ENCODE measurements at regions of chr20 and their contacts with region 1.

Region 1: GRCh38 chr20:14406495-14406894 is 69.1 kb upstream of the FLRT3 start:
- DNase-seq: no peak
- CTCF ChIP-seq: no peak

Region 2: GRCh38 chr20:14355791-14356190 is 50.7 kb before region 1 on chr20:
- CTCF ChIA-PET with region 1: no interaction called
- POLR2A ChIA-PET with region 1: interaction called, 10 read pairs
- DNase-seq: no peak
- CTCF ChIP-seq: no peak

Region 3: GRCh38 chr20:14561741-14562221 is 155.3 kb after region 1 on chr20:
- CTCF ChIA-PET with region 1: no interaction called
- POLR2A ChIA-PET with region 1: no interaction called
- DNase-seq: no peak
- CTCF ChIP-seq: no peak

Measured in GM10248 (cell line).